Ascending aorta (tissue), 2 donors: ENCODE measurements at regions of chr6 and their contacts with region 1.

Region 1: GRCh38 chr6:17599885-17600526 is at the start of gene FAM8A1:
- DNase-seq: peak; percentile 74 to 96
- H3K4me3 ChIP-seq: peak within 1 kb of the TSS; percentile 94 to 98
- H3K27ac ChIP-seq: peak within 1 kb of the TSS; percentile 94 to 97
- H3K4me1 ChIP-seq: peaks cover 0 to 4% of the 10 kb centered on the region in 2 donors
- H3K27me3 ChIP-seq: no peaks in the 10 kb centered on the region
- CTCF ChIP-seq: peak; percentile 53 to 74 (median 56)
- total RNA-seq, gene FAM8A1: 31.5 TPM

Region 2: DNA sequence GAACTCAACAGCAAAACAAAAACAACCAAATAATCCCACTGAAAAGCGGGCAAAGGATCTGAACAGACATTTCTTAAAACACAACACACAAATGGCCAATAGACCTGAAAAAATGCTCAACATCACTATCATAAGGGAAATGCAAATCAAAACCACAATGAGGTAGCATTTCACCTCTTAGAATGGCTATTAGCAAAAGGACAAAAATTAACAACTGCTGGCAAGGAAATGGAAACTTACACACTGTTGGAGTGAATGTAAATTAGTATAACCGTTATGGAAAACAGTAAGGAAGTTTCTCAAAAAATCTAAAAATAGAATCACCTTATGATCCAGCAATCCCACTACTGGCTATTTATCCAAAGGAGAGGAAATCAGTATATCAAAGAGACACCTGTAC is 21.0 kb after region 1 on chr6:
- intact Hi-C with region 1: no loop called
- DNase-seq: no peak
- H3K4me3 ChIP-seq: no peak overlapping the region
- H3K27ac ChIP-seq: no peak overlapping the region
- H3K4me1 ChIP-seq: no peaks in the 10 kb centered on the region
- H3K27me3 ChIP-seq: no peaks in the 10 kb centered on the region
- CTCF ChIP-seq: no peak

Region 3: DNA sequence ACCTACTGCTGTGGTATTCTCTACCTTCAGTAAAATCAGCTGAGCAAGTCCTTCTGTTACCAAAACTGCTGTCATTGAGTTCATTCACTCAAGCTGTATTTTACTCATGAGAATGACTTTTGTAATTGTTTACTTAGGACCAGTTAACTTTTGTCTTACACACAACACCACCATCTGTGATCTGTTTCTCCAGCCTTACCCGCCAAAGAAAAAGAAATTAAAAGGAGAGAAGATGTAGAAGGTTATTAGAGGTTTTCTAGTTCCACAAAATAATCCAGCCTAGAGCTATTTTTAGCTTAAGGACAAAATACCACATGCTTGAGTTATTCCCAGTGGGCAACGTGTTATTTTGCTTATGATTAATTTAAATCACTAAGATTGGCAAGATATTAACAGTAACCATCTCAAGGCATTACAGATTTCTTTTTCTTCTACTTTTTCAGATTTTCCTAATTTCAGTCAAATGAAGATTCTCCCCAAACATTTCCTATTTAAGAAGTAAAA is 38.3 kb after region 1 on chr6:
- intact Hi-C with region 1: loop called (anchors 2 kb)
- DNase-seq: no peak
- H3K4me3 ChIP-seq: peak overlapping the region in 1 of 2 donors; percentile 35
- H3K27ac ChIP-seq: peak overlapping the region; percentile 20 to 69
- H3K4me1 ChIP-seq: peaks cover 0 to 17% of the 10 kb centered on the region in 2 donors
- H3K27me3 ChIP-seq: no peaks in the 10 kb centered on the region
- CTCF ChIP-seq: no peak